AG04449 (cell line): ENCODE measurements at regions of chr11 and their contacts with region 1.

Region 1: GRCh38 chr11:75204685-75205563 is 35.6 kb upstream of the TPBGL start:
- DNase-seq: no peak
- H3K4me3 ChIP-seq: no peak overlapping the region
- CTCF ChIP-seq: peak; percentile 96

Region 2: DNA sequence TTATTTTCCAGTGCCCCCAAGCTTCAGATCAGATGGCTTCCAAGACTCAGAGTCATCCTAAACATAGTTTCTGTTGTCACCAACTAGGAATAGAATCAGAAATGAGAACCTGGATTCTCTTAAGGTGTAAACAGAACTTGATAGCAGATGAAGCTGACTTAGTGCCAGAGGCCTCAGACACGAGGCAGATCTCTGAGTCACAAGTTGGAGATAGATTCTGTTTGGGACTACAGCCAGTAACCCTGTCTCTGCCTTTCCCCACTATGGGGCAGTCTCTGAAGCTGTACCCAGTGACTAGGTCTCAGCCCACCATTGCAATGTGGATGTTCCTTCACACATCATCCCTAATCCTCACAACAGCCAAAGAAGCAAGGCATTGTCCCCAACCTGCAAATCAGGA is 190.8 kb before region 1 on chr11:
- CTCF ChIA-PET with region 1: interaction called, 45 read pairs
- POLR2A ChIA-PET with region 1: no interaction called
- DNase-seq: peak; percentile 57
- H3K4me3 ChIP-seq: no peak overlapping the region
- CTCF ChIP-seq: no peak

Region 3: GRCh38 chr11:75031771-75032549 is 173.0 kb before region 1 on chr11:
- CTCF ChIA-PET with region 1: interaction called, 20 read pairs
- POLR2A ChIA-PET with region 1: no interaction called
- DNase-seq: no peak
- H3K4me3 ChIP-seq: no peak overlapping the region
- CTCF ChIP-seq: peak; percentile 93

Region 4: GRCh38 chr11:75223954-75224643 is 19.2 kb after region 1 on chr11:
- CTCF ChIA-PET with region 1: interaction called, 27 read pairs
- POLR2A ChIA-PET with region 1: no interaction called
- DNase-seq: no peak
- H3K4me3 ChIP-seq: no peak overlapping the region
- CTCF ChIP-seq: no peak

Region 5: GRCh38 chr11:75241036-75241905 is 36.3 kb after region 1 on chr11:
- CTCF ChIA-PET with region 1: interaction called, 252 read pairs
- POLR2A ChIA-PET with region 1: no interaction called
- DNase-seq: no peak
- H3K4me3 ChIP-seq: peak overlapping the region; percentile 62
- CTCF ChIP-seq: peak; percentile 75

Region 6: DNA sequence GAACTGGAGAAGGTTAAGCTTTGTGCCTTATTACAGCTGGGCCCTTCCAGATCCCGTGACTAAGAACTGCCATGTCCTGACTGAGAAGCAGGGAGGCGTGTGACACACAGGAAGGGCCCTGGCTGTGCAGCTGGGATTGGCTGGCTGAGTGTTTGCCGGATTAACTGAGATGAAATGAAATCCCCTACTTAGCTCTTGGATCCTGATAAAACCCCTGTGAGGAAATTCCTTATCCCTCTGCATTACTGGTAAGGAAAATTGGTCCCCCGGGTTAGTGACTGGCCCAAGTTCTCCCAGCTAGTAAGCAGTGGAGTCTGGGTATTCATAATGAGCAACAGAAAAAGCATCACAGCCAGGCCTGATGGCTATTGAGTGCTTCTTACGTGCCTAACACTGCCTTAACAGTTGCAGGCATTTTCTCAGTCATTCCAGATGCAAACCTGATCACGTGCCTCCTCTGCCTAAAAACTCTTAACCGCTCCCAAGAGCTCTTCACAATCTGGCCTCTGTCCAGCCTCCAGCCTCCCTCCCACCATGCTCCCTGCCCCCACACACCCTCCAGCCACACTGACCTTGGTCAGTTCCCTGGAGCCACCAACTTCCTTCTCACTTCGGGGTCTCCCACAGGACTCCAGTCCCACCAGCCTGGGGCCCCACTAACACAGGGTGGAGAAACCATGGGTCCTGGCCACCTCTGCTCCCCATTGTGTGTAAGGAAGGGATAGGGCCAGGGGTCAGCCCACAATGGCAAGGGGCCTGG is 108.8 kb after region 1 on chr11:
- CTCF ChIA-PET with region 1: no interaction called
- POLR2A ChIA-PET with region 1: no interaction called
- DNase-seq: no peak
- H3K4me3 ChIP-seq: no peak overlapping the region
- CTCF ChIP-seq: no peak

Region 7: DNA sequence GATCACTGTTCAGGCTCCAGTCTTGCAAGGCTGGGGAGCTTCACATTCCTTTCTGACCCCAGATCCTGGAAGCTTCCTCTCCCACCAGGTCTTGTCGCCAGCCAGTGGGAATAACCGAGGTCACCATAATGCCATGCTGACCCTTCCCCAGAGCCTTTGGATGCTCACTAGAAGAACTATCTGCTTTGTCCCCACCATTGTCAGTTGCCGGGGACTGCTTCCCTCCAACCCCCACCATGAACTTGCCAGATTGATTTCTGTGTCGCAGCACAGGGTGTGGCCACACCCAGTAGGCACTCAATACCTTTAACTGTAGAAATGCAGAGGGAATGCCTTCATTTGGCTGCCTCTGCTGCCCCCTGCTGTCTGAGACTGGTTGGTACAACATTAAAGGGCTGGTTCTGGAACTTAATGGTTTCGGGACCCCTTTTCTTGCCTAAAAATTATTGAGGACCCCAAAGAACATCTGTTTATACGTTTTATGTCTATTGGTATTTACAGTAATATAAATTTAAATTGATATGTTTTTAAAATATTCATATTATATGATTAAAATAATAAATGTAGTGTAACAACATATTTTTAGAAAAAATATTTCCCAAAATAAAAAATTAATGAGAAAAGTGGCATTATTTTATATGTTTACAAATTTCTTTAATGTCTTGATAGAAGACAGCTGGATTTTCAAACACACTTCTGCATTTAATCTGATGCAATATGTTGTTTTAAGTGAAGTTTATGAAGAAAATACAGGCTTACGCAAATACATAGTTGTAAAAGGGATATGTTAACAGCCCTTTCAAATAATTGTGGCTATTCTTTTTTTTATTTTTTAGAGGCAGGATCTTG is 327.5 kb after region 1 on chr11:
- CTCF ChIA-PET with region 1: no interaction called
- POLR2A ChIA-PET with region 1: no interaction called
- DNase-seq: no peak
- H3K4me3 ChIP-seq: no peak overlapping the region
- CTCF ChIP-seq: peak; percentile 76